Dorsolateral prefrontal cortex (tissue), 120 donors: ENCODE measurements at regions of chr15 and their contacts with region 1.

Region 1: GRCh38 chr15:73897441-73898261 is 24.3 kb downstream of the TBC1D21 start:
- DNase-seq: no peak
- H3K4me3 ChIP-seq: no peak overlapping the region
- H3K27ac ChIP-seq: no peak overlapping the region
- H3K27me3 ChIP-seq: peaks cover 0 to 5% (median 0%) of the 10 kb centered on the region in 45 donors
- CTCF ChIP-seq: peak in 53 of 56 donors; percentile 17 to 63 (median 48)

Region 2: GRCh38 chr15:73838831-73839426 is 58.7 kb before region 1 on chr15:
- intact Hi-C with region 1: loop called in 1 of 2 experiments (anchors 10 kb)
- DNase-seq: peak; percentile 24 to 97 (median 58)
- H3K4me3 ChIP-seq: no peak overlapping the region
- H3K27ac ChIP-seq: no peak overlapping the region
- H3K27me3 ChIP-seq: peaks cover 0 to 14% (median 0%) of the 10 kb centered on the region in 45 donors
- CTCF ChIP-seq: no peak